Activated B cell treated with CpG ODN at 0.5 μM for 24 hours (primary cell): ENCODE measurements at regions of chr5 and their contacts with region 1.

Region 1: DNA sequence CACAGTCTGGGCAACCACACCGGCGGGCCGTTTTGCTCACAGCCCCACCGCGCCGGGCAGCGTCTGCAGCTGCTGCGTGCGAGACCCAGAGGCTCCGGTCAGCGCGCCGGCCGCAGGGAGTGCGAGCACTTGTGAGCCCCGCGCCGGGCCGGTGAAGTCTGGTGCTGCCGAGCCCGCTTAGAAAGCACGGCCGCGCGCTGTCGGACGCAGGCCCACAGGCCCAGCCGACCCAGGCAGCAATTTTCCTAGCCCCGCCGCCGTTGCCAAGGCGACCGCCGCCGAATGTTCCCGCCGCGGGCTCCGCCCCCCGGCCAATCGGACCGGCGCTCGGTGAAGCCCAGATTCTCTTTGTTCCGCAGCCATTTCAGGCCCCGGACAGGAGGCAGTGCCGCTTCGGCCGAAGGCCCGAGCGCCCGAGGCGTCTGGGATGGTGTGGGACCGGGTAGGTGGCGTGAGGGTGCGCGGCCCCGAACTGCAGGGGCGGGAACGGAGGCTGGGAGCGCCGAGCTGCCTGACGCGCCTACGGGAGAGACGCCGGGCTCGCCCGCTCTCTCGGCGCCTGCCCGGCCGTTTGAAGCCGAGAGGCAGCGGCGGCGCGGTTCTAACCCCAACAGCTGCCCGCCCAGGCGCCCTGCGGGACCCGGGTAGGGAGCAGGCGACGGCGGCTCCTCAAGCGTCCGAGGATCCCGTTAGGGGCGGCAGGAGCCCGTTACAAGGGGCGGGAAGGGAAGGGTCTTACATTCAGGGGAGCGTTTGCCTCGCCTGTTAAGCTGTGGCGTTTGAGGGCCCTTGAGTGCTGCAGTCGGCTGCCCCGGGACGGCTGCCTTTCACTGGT is at the start of gene TNPO1:
- DNase-seq: peak; percentile 94
- ATAC-seq: peak; percentile 79
- H3K4me3 Mint-ChIP-seq: peak within 1 kb of the TSS; percentile 95
- H3K27ac Mint-ChIP-seq: peak within 1 kb of the TSS; percentile 97
- H3K4me1 Mint-ChIP-seq: peaks cover 25% of the 10 kb centered on the region
- H3K27me3 Mint-ChIP-seq: peaks cover 5% of the 10 kb centered on the region
- CTCF ChIP-seq: no peak
- total RNA-seq, gene TNPO1: 89.6 and 109 TPM in 2 replicates

Region 2: DNA sequence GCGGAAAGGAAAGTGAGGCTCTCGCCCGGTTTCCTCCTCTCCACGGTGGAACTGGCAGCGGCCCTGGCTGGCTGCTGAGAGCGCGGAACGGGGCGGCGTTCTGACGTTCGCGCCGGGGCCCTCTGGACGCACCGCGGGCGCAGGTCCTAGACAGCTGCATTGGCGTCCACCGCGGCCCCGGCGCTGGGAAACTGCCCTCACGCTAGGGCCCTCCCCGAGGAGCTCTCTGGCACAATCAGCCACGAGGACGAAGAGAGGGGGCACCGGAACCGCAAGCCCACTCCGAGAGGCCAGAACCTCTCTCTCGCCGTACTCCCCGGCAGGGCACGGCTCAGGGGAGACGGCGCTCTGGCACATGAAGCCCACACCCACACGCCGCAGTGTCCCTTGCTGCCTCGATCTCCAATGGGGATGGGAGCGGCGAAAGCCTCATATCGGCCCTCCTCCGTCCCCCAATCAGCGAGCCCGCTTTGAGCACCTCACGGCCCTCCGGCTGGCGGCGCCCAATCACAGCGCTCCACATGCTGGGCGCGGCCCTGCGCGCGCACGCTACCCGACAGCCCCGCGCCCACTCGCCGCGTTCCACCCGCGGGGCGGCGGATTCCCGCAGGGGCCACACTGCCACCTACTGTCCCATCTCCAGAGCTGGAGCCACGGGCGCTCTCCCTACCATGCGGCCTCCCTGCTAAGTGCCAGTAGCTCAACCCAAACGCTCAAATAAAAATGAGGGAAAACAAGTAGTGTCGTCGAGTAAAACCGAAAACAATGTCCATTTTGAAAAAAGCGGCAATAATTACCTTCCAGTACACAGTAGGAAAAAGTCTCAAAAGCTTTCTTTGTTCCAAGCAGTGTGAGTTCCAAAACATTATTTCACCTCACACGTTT is 508.3 kb before region 1 on chr5:
- CTCF ChIA-PET with region 1: no interaction called
- POLR2A ChIA-PET with region 1: interaction called, 7 read pairs
- intact Hi-C with region 1: loop called (anchors 5 kb)
- DNase-seq: peak; percentile 95
- ATAC-seq: peak; percentile 95
- H3K4me3 Mint-ChIP-seq: peak overlapping the region; percentile 92
- H3K27ac Mint-ChIP-seq: peak overlapping the region; percentile 97
- H3K4me1 Mint-ChIP-seq: peaks cover 46% of the 10 kb centered on the region
- H3K27me3 Mint-ChIP-seq: no peaks in the 10 kb centered on the region
- CTCF ChIP-seq: peak; percentile 24

Region 3: DNA sequence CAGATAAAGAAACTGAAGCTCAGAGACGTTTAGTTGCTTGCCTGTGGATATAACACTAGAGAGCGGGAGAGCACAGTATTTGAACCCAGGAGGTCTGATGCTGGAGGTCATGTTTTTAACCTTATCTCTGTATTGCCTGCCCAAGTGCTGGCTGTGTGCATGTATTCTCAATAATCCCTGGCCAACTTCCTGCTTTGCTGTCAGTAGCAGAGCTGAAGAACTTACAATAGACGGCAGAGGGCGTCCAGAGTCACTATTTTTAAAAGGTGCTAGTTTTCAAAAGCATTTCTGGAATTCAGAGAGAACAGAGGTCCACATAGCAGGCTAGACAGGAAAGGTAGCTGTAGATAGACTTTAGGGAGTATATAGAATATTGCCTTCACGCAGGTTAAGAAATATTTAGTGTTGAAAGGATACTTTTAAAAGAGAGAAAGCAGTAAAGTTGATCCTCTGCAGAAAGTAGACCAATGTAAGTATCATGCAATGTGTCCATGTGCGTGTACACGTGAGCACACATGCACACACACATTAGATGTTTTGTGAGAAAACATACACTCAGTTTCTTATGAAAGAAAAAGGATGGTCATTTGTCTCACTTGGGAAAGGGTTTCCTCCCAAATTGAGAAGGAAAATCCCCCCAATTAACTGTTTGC is 450.1 kb before region 1 on chr5:
- CTCF ChIA-PET with region 1: interaction called, 19 read pairs
- POLR2A ChIA-PET with region 1: no interaction called
- intact Hi-C with region 1: loop called (anchors 1 kb)
- DNase-seq: no peak
- ATAC-seq: peak; percentile 68
- H3K4me3 Mint-ChIP-seq: no peak overlapping the region
- H3K27ac Mint-ChIP-seq: no peak overlapping the region
- H3K4me1 Mint-ChIP-seq: peaks cover 11% of the 10 kb centered on the region
- H3K27me3 Mint-ChIP-seq: no peaks in the 10 kb centered on the region
- CTCF ChIP-seq: no peak

Region 4: GRCh38 chr5:72486371-72486770 is 330.2 kb before region 1 on chr5:
- CTCF ChIA-PET with region 1: no interaction called
- POLR2A ChIA-PET with region 1: no interaction called
- intact Hi-C with region 1: no loop called
- DNase-seq: no peak
- ATAC-seq: no peak
- H3K4me3 Mint-ChIP-seq: no peak overlapping the region
- H3K27ac Mint-ChIP-seq: no peak overlapping the region
- H3K4me1 Mint-ChIP-seq: no peaks in the 10 kb centered on the region
- H3K27me3 Mint-ChIP-seq: peaks cover 4% of the 10 kb centered on the region
- CTCF ChIP-seq: no peak

Region 5: GRCh38 chr5:72611118-72611730 is 205.3 kb before region 1 on chr5:
- CTCF ChIA-PET with region 1: interaction called, 50 read pairs
- POLR2A ChIA-PET with region 1: interaction called, 3 read pairs
- intact Hi-C with region 1: loop called (anchors 1 kb)
- DNase-seq: no peak
- ATAC-seq: peak; percentile 69
- H3K4me3 Mint-ChIP-seq: no peak overlapping the region
- H3K27ac Mint-ChIP-seq: no peak overlapping the region
- H3K4me1 Mint-ChIP-seq: peaks cover 4% of the 10 kb centered on the region
- H3K27me3 Mint-ChIP-seq: peaks cover 12% of the 10 kb centered on the region
- CTCF ChIP-seq: no peak

Region 6: GRCh38 chr5:72847989-72848473 is 31.5 kb after region 1 on chr5:
- CTCF ChIA-PET with region 1: interaction called, 22 read pairs
- POLR2A ChIA-PET with region 1: interaction called, 64 read pairs
- intact Hi-C with region 1: loop called (anchors 1 kb)
- DNase-seq: peak; percentile 82
- ATAC-seq: peak; percentile 73
- H3K4me3 Mint-ChIP-seq: peak overlapping the region; percentile 96
- H3K27ac Mint-ChIP-seq: peak overlapping the region; percentile 96
- H3K4me1 Mint-ChIP-seq: peaks cover 56% of the 10 kb centered on the region
- H3K27me3 Mint-ChIP-seq: no peaks in the 10 kb centered on the region
- CTCF ChIP-seq: no peak

Region 7: DNA sequence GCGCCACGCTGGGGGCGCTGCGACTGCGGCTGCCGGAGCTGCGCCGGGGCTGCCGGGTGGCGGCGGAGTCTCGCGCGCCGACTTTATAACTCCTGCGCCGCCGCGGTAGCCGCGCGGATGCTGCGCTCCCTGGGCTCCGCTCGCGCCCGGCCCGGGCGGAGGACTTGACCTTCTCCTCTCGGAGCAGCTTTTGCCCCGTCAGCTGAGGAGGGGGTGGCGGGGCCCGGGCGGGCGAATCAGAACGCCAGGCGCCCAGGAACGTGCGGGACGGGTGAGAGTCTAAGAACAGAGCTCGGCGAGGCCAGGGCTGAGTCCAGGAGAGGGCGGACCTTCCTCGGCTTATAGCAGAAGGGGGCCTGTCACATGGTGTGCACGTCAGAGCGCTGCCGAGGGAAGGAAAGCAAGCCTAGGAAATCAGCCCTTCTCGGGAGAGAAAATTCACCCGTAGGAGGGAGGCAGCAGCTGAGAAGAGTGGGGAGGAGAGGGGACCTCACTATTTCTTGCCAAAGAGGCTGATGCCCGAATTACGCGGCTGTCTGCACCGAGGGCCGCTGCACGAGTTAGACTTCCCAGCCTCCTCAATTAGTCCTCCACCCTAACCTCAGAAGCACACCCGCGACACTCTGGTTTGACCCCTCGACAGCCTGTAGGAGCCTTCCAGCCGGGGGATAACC is 632.1 kb after region 1 on chr5 and contains the start of gene FOXD1:
- CTCF ChIA-PET with region 1: no interaction called
- POLR2A ChIA-PET with region 1: no interaction called
- intact Hi-C with region 1: loop called (anchors 10 kb)
- DNase-seq: peak; percentile 54
- ATAC-seq: peak; percentile 61
- H3K4me3 Mint-ChIP-seq: peak within 1 kb of the TSS; percentile 88
- H3K27ac Mint-ChIP-seq: peak within 1 kb of the TSS; percentile 50
- H3K4me1 Mint-ChIP-seq: peaks cover 16% of the 10 kb centered on the region
- H3K27me3 Mint-ChIP-seq: peaks cover 63% of the 10 kb centered on the region
- CTCF ChIP-seq: no peak
- total RNA-seq, gene FOXD1: 0.09 and 0.10 TPM in 2 replicates